ENCODE measurements at regions of chr1 and their contacts with region 1.

Region 1: GRCh38 chr1:32521165-32521564 is 18.1 kb upstream of the ZBTB8A start:
- DNase-seq: no peak
- H3K4me3 Mint-ChIP-seq: peak overlapping the region; percentile 64
- H3K27ac Mint-ChIP-seq: no peak overlapping the region
- H3K4me1 Mint-ChIP-seq: peaks cover 6% of the 10 kb centered on the region
- H3K27me3 Mint-ChIP-seq: peaks cover 7% of the 10 kb centered on the region

Region 2: GRCh38 chr1:32394141-32394889 is 126.8 kb before region 1 on chr1 and contains the start of gene BSDC1:
- CTCF ChIA-PET with region 1: no interaction called
- POLR2A ChIA-PET with region 1: no interaction called
- intact Hi-C with region 1: no loop called
- DNase-seq: peak; percentile 99
- H3K4me3 Mint-ChIP-seq: peak within 1 kb of the TSS; percentile 94
- H3K27ac Mint-ChIP-seq: peak within 1 kb of the TSS; percentile 90
- H3K4me1 Mint-ChIP-seq: peaks cover 22% of the 10 kb centered on the region
- H3K27me3 Mint-ChIP-seq: no peaks in the 10 kb centered on the region
- total RNA-seq, gene BSDC1: 32.1 to 33.2 TPM

Region 3: GRCh38 chr1:32636914-32637645 is 115.9 kb after region 1 on chr1:
- CTCF ChIA-PET with region 1: interaction called, 10 read pairs
- POLR2A ChIA-PET with region 1: interaction called, 3 read pairs
- intact Hi-C with region 1: no loop called
- DNase-seq: no peak
- H3K4me3 Mint-ChIP-seq: no peak overlapping the region
- H3K27ac Mint-ChIP-seq: no peak overlapping the region
- H3K4me1 Mint-ChIP-seq: peaks cover 4% of the 10 kb centered on the region
- H3K27me3 Mint-ChIP-seq: no peaks in the 10 kb centered on the region